ENCODE measurements at regions of chr12 and their contacts with region 1.

Region 1: DNA sequence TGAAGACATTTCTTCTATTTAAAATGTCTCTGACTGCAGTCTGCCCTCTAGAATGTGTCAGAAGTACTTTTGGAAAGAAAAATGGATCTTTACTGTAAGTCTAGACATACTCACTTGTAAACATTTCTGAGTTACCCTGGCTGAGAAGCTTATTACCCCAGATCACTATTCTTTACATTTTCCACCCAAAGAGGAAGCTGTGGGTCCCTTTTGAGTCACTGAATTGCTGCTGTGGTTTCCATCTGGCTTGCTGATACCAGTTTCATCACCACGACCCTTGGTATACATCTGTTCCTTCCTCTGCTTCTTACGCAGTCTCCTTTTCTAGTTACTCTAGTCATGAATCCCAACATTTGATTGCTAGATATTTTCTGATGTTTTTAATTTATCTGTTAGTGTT is 20.2 kb upstream of the CLEC4D start:
- DNase-seq: peak; percentile 83
- H3K4me3 Mint-ChIP-seq: no peak overlapping the region
- H3K27ac Mint-ChIP-seq: peak overlapping the region; percentile 80
- H3K4me1 Mint-ChIP-seq: peaks cover 25% of the 10 kb centered on the region
- H3K27me3 Mint-ChIP-seq: peaks cover 5% of the 10 kb centered on the region

Region 2: GRCh38 chr12:7966563-7966962 is 526.5 kb before region 1 on chr12:
- CTCF ChIA-PET with region 1: no interaction called
- intact Hi-C with region 1: no loop called
- DNase-seq: no peak
- H3K4me3 Mint-ChIP-seq: no peak overlapping the region
- H3K27ac Mint-ChIP-seq: peak overlapping the region; percentile 13
- H3K4me1 Mint-ChIP-seq: peaks cover 30% of the 10 kb centered on the region
- H3K27me3 Mint-ChIP-seq: no peaks in the 10 kb centered on the region

Region 3: GRCh38 chr12:8554451-8555195 is 61.5 kb after region 1 on chr12:
- CTCF ChIA-PET with region 1: no interaction called
- intact Hi-C with region 1: loop called (anchors 1 kb)
- DNase-seq: no peak
- H3K4me3 Mint-ChIP-seq: no peak overlapping the region
- H3K27ac Mint-ChIP-seq: no peak overlapping the region
- H3K4me1 Mint-ChIP-seq: peaks cover 11% of the 10 kb centered on the region
- H3K27me3 Mint-ChIP-seq: no peaks in the 10 kb centered on the region

Region 4: DNA sequence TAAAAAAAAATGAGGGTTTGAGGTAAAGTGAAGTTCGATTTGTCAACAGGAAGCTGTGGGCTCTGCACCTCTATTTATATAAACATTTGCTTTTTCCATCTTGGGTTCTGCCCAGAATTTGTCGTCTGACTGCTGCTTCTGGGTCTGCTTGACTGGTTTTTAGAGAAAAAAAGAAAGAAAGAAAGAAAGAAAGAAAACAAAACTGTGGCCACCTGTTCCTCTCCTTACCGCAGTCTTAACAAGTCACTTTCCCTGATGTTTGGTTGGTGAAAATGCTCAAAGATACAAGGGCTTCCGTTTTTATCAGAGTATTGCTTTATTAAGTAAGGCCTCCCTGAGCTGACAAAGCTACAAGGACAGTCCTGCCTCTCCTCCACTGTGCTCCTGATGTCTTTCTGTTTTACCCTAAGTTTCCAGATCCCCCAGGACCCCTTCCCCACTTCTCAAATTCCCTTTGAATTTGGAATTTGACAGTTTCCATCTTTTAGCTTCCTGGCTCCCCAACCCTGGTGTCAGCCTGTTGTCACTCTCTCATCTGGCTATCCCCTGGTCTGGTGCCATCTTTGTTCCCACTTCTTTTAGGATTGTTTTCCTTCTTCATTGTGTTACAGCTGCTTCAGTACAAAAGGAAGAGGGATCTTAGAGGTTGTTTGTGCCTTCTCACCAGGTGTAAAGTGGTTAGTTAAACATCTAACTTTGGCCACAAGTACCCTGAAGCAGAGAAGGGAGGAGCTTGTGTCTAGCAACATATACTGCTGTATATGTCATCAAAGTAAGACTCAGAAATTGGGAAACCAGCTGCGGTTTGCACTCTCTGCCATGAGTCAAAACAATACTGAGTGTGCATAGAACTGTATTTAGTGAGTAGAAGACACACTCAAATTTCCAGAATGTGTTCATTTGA is 151.5 kb after region 1 on chr12:
- CTCF ChIA-PET with region 1: no interaction called
- intact Hi-C with region 1: loop called (anchors 1 kb)
- DNase-seq: peak; percentile 85
- H3K4me3 Mint-ChIP-seq: peak overlapping the region; percentile 47
- H3K27ac Mint-ChIP-seq: peak overlapping the region; percentile 86
- H3K4me1 Mint-ChIP-seq: peaks cover 36% of the 10 kb centered on the region
- H3K27me3 Mint-ChIP-seq: no peaks in the 10 kb centered on the region

Region 5: DNA sequence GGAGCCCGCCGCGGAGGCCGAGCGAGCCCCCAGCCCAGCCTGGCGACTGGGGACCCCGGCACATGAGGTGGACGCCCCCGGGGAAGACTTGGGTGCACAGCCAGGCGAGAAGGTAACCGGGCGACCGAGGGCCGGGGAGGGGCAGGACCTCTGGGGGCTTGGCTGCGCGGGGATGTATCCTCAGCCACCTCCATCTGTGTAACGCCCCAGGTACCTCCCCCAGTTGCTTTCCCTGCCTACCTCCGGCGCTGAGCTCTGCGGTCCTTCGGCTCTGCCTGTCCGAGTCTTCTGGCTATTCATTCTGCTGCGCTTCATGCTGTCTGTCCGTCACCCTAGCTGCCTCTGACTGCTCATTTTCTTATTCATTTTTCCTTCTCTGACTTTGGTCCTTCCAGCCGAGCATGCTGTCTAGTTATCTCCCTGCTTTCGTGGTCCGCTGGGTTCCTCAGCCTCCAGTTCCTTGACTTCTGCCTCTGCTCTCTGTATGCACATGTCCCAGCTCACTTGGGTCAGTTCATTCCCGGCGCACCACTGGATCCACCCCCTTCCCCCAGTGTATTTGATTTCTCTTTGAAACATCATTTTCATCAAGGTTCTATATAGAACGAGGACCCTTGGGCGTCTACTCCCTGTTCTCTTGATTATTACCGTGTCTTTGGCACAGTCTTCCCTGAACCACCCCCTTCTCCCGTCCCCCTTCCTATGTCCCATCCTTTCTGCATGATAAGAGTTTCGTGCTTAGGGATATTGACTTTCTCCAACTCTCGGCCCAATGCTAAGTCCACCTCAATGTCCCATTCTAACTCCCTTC is 421.8 kb after region 1 on chr12:
- CTCF ChIA-PET with region 1: no interaction called
- intact Hi-C with region 1: loop called (anchors 1 kb)
- DNase-seq: peak; percentile 61
- H3K4me3 Mint-ChIP-seq: no peak overlapping the region
- H3K27ac Mint-ChIP-seq: no peak overlapping the region
- H3K4me1 Mint-ChIP-seq: peaks cover 15% of the 10 kb centered on the region
- H3K27me3 Mint-ChIP-seq: no peaks in the 10 kb centered on the region

Region 6: DNA sequence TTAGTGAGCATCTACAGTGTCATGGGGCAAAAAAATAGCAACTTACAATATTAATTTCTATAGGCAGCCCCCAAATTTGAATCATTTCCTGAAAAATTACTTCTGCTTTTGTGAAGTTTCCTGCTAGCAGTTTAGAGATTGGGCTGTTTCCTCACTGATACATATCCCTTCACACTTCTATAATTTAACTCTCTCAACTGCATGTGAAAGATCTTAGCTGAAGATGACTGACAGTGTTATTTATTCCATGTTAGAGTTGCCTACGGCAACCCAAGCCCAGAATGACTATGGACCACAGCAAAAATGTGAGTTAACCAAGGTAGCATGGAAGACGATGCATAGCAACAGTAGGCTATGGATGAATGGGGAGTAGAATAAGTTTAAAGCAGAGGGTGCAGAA is 496.3 kb after region 1 on chr12 and contains the start of gene KLRG1:
- CTCF ChIA-PET with region 1: no interaction called
- intact Hi-C with region 1: loop called (anchors 1 kb)
- DNase-seq: peak; percentile 55
- H3K4me3 Mint-ChIP-seq: peak within 1 kb of the TSS; percentile 53
- H3K27ac Mint-ChIP-seq: peak within 1 kb of the TSS; percentile 43
- H3K4me1 Mint-ChIP-seq: peaks cover 61% of the 10 kb centered on the region
- H3K27me3 Mint-ChIP-seq: no peaks in the 10 kb centered on the region
- total RNA-seq, gene KLRG1: 3.9 to 5.2 TPM

Region 7: GRCh38 chr12:9103050-9103849 is 610.2 kb after region 1 on chr12:
- CTCF ChIA-PET with region 1: no interaction called
- intact Hi-C with region 1: loop called (anchors 1 kb)
- DNase-seq: peak; percentile 34
- H3K4me3 Mint-ChIP-seq: no peak overlapping the region
- H3K27ac Mint-ChIP-seq: peak overlapping the region; percentile 20
- H3K4me1 Mint-ChIP-seq: peaks cover 19% of the 10 kb centered on the region
- H3K27me3 Mint-ChIP-seq: no peaks in the 10 kb centered on the region

Measured in activated naive CD4-positive, alpha-beta T cell treated with anti-CD3 and anti-CD28 coated beads for 36 hours (primary cell).